Heart right ventricle (tissue), 16 donors: ENCODE measurements at regions of chr6 and their contacts with region 1.

Region 1: GRCh38 chr6:28281288-28282064 is at the start of gene PGBD1:
- DNase-seq: peak; percentile 72 to 85
- ATAC-seq: peak; percentile 92 to 98 (median 96)
- H3K4me3 ChIP-seq: peak within 1 kb of the TSS; percentile 47 to 88 (median 76)
- H3K27ac ChIP-seq: peak within 1 kb of the TSS in 8 of 10 donors; percentile 34 to 77 (median 60)
- H3K4me1 ChIP-seq: peaks cover 0 to 16% (median 11%) of the 10 kb centered on the region in 9 donors
- H3K27me3 ChIP-seq: peaks cover 0 to 6% (median 0%) of the 10 kb centered on the region in 7 donors
- CTCF ChIP-seq: peak in 2 of 9 donors; percentile 2 to 14
- total RNA-seq, gene PGBD1: 1.6 to 3.6 (median 2.7) TPM

Region 2: DNA sequence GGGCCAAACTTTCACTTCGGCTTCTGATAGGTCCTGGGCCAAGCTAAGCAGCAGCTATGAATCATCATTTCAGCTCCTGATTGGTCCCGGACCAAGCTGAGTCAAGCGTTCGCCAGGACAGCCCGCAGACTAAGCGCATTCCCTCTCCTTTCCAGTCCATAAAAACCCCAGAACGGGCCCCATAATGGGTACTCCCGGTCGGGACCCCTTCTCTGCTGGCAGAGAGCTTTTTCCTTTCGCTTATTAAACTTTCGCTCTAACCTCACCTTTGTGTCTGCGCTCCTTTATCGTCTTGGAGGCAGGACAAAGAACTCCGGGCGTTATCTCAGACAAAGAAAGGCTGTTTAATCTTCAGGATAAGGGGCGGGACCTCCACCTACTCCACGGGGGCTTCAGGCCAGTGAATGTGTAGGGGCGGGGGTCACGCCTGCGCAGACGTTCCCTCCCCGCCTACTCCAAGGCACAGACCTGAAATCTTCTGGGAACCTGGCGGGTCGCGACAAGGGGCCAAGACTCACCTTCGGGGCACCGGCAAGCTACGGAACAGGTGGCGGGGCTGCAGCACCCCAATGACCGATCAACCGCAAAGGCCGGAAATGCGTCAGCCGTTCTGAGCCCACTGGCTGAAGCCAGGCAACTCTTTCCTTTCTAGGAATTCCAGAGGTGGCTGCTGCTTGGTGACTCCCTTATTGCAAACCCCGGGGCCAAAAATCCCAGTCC is 54.2 kb after region 1 on chr6 and contains the start of gene ZSCAN31:
- intact Hi-C with region 1: loop called in 5 of 10 experiments (anchors 5 to 10 kb)
- DNase-seq: peak; percentile 87 to 97
- ATAC-seq: peak; percentile 95 to 99 (median 97)
- H3K4me3 ChIP-seq: peak within 1 kb of the TSS; percentile 56 to 90 (median 66)
- H3K27ac ChIP-seq: peak within 1 kb of the TSS; percentile 88 to 97 (median 92)
- H3K4me1 ChIP-seq: peaks cover 0 to 25% (median 11%) of the 10 kb centered on the region in 9 donors
- H3K27me3 ChIP-seq: no peaks in the 10 kb centered on the region
- CTCF ChIP-seq: no peak
- total RNA-seq, gene ZSCAN31: 8.0 to 17.4 (median 11.9) TPM

Region 3: DNA sequence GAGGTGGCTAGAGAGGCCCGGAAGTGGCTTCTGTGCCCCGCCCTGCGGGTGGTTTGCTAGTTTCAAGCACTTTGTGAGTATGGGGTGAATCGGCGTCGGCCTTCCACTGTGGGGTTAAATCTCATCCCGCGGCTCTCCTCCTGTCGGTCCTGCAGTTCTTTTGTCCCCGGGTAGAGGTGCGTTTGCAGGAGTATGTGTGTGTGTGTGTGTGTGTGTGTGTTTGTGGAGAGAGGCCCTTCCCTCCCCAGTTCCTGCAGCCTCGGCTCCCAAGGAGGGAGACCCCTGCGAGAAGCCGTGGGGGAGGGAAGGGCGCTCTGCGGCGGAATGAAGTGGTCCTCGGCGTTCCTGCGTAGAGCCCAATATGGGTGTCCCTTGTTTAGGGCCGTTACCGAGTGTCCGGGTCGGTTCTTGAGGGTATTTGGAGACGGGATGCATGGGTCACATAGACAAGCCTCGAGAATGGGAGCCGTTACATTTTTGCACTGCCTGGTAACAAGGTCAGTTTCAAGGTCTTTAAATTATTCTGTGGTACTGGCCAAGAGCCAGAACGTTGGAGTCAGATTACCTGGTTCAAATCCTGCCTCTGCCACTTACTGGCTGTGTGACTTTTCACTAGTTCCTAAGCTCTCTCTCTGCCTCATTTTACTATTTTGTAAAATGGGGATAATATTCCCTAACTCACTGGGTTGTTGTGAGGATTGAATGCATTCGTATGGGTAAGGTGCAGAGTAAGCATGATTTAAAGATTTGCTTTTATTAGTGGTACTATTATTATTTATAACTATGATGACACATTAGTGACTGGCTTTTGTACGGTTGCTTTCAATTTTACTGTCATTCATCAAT is 68.6 kb after region 1 on chr6 and contains the start of gene ZKSCAN3:
- intact Hi-C with region 1: loop called in 1 of 10 experiments (anchors 10 kb)
- DNase-seq: peak; percentile 82 to 85
- ATAC-seq: peak; percentile 93 to 97 (median 96)
- H3K4me3 ChIP-seq: peak within 1 kb of the TSS; percentile 61 to 88 (median 78)
- H3K27ac ChIP-seq: peak within 1 kb of the TSS; percentile 28 to 90 (median 78)
- H3K4me1 ChIP-seq: peaks cover 3 to 36% (median 24%) of the 10 kb centered on the region in 9 donors
- H3K27me3 ChIP-seq: no peaks in the 10 kb centered on the region
- CTCF ChIP-seq: no peak
- total RNA-seq, gene ZKSCAN3: 3.1 to 6.8 (median 5.1) TPM

Region 4: GRCh38 chr6:28368522-28368921 is 87.0 kb after region 1 on chr6:
- intact Hi-C with region 1: no loop called
- DNase-seq: no peak
- ATAC-seq: no peak
- H3K4me3 ChIP-seq: no peak overlapping the region
- H3K27ac ChIP-seq: no peak overlapping the region
- H3K4me1 ChIP-seq: no peaks in the 10 kb centered on the region
- H3K27me3 ChIP-seq: no peaks in the 10 kb centered on the region
- CTCF ChIP-seq: no peak